WTC11 (cell line): ENCODE measurements at regions of chr15 and their contacts with region 1.

Region 1: GRCh38 chr15:65194826-65195547 is 9.8 kb upstream of the CLPX start:
- DNase-seq: no peak
- ATAC-seq: peak; percentile 79
- H3K4me3 Mint-ChIP-seq: no peak overlapping the region
- H3K27ac Mint-ChIP-seq: no peak overlapping the region
- H3K4me1 Mint-ChIP-seq: peaks cover 5% of the 10 kb centered on the region; the same call in 1 of the 2 replicates
- H3K27me3 Mint-ChIP-seq: no peaks in the 10 kb centered on the region
- CTCF ChIP-seq: no peak

Region 2: GRCh38 chr15:65275728-65276126 is 80.7 kb after region 1 on chr15:
- CTCF ChIA-PET with region 1: interaction called, 14 read pairs
- POLR2A ChIA-PET with region 1: no interaction called
- DNase-seq: no peak
- ATAC-seq: no peak
- H3K4me3 Mint-ChIP-seq: no peak overlapping the region
- H3K27ac Mint-ChIP-seq: no peak overlapping the region; the same call in 1 of the 2 replicates
- H3K4me1 Mint-ChIP-seq: peaks cover 7% of the 10 kb centered on the region; the same call in 1 of the 2 replicates
- H3K27me3 Mint-ChIP-seq: no peaks in the 10 kb centered on the region
- CTCF ChIP-seq: no peak